HAP-1 (cell line): ENCODE measurements at regions of chr1 and their contacts with region 1.

Region 1: GRCh38 chr1:165367375-165367993 is 11.0 kb upstream of the LMX1A start:
- DNase-seq: peak; percentile 41 to 89
- H3K4me3 ChIP-seq: no peak overlapping the region
- H3K4me1 ChIP-seq: no peaks in the 10 kb centered on the region
- H3K27me3 ChIP-seq: peaks cover 6% of the 10 kb centered on the region; the same call in 1 of the 2 replicates

Region 2: DNA sequence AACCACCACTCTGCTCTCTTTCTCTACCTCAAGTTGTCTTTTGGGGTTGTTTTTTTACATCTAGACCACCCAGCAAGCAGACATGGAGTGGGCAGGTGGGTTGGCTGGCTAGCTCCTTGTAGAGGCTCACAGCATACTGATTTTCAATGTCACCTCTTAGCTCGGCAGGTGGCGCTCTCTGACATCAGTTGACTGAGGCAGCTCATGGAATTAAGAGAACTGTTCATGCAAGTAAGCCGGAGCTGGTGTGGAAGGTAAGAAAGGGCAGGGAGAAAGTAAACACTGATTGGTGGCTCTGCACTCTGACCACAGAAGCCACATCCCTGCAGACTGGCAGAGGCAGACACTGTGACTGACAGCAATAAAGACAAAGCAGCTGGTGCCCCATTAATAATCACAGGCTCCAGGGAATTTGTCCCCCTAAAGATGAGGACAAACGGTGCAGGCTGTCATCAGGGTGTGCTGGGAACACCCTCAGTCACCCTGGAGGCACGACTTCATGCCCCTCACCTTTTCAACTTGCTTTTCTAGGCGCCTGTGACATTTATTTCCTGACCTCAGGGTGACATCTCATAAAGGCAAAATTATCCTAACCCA is 237.8 kb before region 1 on chr1:
- in situ Hi-C with region 1: loop called (anchors 10 kb)
- DNase-seq: peak; percentile 38 to 81
- H3K4me3 ChIP-seq: no peak overlapping the region
- H3K4me1 ChIP-seq: no peaks in the 10 kb centered on the region
- H3K27me3 ChIP-seq: peaks cover 38% of the 10 kb centered on the region

Region 3: DNA sequence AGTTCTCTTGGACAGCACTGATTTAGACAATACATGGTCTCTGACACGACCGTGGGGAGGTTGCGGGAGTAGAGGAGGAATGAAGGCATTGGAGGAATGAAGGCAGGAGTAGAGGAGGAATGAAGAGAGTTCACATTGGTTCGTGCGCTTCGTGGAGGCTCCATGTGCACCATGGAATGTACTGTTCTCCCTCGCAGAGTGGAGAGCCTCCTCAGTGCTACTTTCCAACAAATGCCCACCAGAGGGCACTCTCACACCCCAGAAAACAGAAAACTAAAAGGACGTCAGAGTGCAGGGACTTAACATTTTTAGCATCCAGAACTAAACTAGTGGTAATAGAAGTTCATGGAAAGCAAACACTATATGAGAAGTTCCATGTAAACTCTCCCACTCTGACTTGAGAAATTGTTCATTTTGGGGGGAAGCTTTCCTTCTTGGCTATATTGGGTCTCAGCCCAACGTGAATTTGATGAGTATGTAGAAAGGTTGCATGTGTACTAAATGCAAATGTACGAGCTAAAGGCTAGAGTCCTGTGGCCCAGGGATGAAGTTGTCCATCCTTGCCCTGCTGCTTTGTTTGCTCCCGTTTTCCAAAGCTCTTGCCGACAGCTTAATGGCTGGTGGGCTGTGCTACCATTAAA is 222.6 kb before region 1 on chr1:
- in situ Hi-C with region 1: no loop called
- DNase-seq: peak; percentile 55 to 71
- H3K4me3 ChIP-seq: no peak overlapping the region
- H3K4me1 ChIP-seq: no peaks in the 10 kb centered on the region
- H3K27me3 ChIP-seq: peaks cover 11% of the 10 kb centered on the region

Region 4: DNA sequence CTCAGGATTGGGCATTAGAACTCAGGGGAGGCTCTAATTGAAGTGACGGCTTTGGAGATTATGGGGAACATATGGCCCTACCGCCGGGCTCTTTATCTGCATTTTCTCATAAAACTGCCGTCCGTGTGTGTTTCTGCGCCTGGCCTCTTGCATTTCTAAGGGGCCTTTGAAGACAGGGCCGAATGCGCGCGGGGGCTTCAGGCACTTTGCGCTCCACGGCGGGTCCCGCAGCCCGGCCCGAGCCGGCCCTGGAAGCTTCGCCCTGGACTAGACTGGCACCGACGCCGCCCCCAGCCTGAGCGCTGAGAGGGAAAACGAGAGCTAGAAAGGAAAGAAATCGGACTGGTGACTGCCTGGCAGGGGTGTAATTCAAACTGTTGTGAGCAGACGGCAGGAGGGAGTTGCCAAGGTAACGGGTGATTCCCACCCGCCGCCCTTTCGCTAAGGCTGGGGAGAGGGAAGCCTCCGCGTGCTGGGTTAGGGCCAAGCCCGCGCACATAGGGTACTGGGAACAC is 131.7 kb before region 1 on chr1:
- in situ Hi-C with region 1: no loop called
- DNase-seq: peak; percentile 12 to 27
- H3K4me3 ChIP-seq: 0 out of 2 replicates have a peak overlapping the region, but pooled peaks have one; percentile 3
- H3K4me1 ChIP-seq: peaks cover 3% of the 10 kb centered on the region; the same call in 1 of the 2 replicates
- H3K27me3 ChIP-seq: peaks cover 25% of the 10 kb centered on the region